HAP-1 (cell line): ENCODE measurements at regions of chr7 and their contacts with region 1.

Region 1: DNA sequence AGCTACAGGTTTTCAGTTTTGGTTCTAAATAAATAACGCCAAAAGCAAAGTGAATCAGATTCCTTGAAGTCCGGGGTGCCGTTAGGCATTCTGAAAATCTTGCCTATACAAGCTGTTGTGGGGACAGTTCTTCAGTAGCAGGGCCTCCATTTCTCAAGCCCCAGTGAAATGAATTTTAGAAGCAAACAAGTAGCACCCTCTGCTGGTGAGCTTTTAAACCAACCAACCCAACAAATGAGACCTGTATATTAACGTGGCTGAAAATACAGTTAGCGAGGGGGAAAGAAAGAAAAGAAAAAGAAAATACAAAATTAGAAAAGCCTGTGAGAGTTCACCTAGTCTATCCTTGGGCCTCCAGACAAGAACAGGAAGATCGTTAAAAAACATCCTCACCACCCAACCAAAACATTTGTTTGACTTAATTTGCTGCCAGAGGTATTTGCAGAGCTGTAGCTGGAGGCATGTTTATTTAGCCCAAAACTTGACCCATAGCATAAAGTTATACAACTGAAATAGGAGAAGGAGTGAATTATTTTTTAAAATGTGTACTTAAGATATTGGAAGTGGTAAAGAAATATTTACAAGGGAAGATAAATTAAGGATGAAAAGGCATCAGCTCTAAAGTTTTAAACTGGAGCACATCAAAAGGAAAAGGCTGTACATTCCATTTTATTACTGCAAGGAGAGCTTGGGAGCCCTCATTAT is 98.9 kb downstream of the DYNC1I1 start:
- DNase-seq: peak; percentile 64 to 67
- H3K4me3 ChIP-seq: no peak overlapping the region
- H3K4me1 ChIP-seq: no peaks in the 10 kb centered on the region
- H3K27me3 ChIP-seq: no peaks in the 10 kb centered on the region

Region 2: DNA sequence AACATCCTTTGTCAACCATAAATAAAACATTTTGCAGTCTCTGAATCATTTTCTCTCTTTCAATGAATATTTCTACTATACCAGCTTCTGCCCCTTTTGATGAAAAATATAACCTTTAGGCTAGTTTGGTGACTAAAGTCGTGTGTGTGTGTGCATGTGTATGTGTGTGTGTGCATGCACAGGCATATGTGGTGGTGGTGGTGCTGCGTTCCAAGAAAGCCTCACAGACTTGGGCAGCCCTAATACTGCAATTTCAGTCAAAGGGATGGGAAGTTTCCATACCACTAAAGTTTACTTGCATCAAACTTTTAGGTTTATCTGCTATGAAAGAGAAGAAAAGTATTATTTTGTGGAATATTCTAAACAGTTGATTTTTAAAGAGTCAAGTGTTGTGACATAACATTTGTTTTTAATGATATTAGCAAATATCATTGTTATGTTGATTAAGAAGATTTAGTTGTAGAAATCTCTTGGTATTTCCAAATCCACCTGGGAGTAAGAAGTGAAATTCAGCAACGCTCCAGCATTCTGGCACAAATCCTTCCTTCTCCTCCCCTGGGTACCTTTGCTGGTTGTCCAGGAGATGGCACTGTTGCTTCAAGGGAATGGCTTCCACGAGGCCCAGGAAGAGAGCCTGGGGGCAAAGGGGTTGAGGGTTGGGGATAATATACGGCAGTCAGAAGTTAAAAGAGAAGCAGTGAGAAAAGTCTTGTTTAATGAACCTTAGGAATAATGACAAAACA is 344.0 kb before region 1 on chr7:
- in situ Hi-C with region 1: loop called (anchors 25 kb)
- DNase-seq: peak; percentile 59 to 82
- H3K4me3 ChIP-seq: no peak overlapping the region
- H3K4me1 ChIP-seq: no peaks in the 10 kb centered on the region
- H3K27me3 ChIP-seq: peaks cover 30% of the 10 kb centered on the region

Region 3: DNA sequence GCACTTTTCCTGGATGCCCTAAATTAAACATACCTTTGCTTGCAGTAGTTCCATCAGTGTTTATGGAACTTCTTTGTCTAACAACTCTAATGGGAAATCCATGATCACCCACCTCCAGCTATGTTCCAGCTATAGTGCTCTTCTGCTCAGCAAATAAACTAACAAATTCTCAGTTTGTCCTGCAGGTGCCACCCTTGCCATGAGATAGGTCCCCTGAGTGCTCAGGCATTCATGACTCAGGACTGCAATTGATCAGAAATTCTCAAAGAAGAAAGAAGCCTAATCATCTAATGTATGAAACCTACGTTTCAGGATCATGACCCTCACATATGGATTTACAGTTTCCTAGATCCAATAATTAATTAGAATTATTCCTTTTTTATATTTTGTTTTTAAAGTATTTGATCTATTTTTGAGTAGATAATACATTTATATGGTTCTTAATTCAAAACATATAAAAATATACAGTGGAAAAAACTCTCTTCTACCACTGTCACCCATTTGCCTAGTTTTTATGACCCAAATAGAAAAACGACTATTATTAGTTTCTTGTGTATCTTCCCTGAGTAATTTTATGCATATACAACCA is 147.5 kb before region 1 on chr7:
- in situ Hi-C with region 1: loop called (anchors 5 kb)
- DNase-seq: peak; percentile 67
- H3K4me3 ChIP-seq: no peak overlapping the region
- H3K4me1 ChIP-seq: no peaks in the 10 kb centered on the region
- H3K27me3 ChIP-seq: peaks cover 5% of the 10 kb centered on the region; the same call in 1 of the 2 replicates

Region 4: GRCh38 chr7:96578606-96579005 is 707.4 kb after region 1 on chr7:
- in situ Hi-C with region 1: no loop called
- DNase-seq: no peak
- H3K4me3 ChIP-seq: no peak overlapping the region
- H3K4me1 ChIP-seq: no peaks in the 10 kb centered on the region
- H3K27me3 ChIP-seq: no peaks in the 10 kb centered on the region